ENCODE measurements at regions of chr6 and their contacts with region 1.

Region 1: DNA sequence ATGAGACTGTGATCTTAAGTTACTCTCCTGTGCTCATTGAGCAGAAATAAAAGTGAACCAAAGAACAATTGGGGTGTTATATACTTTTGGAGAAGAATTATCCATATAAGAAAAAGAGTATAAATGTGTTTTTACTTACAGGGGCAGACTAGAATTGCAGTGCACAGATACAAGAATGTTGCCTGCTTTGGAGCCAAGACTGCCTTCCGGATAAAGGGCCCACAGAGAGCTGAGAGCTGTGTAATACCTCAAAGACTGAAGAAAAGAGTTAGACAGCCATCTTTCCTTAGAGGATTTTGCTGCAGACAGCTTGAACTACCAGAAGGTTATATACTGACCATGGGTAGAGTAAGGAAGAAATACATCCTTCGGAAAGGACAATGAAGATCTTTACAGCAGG is 1235.5 kb upstream of the CITED2 start:
- DNase-seq: no peak
- H3K4me3 ChIP-seq: no peak overlapping the region
- H3K27ac ChIP-seq: no peak overlapping the region
- H3K4me1 ChIP-seq: no peaks in the 10 kb centered on the region
- H3K27me3 ChIP-seq: no peaks in the 10 kb centered on the region
- CTCF ChIP-seq: no peak
- POLR2A ChIP-seq: no peak

Region 2: DNA sequence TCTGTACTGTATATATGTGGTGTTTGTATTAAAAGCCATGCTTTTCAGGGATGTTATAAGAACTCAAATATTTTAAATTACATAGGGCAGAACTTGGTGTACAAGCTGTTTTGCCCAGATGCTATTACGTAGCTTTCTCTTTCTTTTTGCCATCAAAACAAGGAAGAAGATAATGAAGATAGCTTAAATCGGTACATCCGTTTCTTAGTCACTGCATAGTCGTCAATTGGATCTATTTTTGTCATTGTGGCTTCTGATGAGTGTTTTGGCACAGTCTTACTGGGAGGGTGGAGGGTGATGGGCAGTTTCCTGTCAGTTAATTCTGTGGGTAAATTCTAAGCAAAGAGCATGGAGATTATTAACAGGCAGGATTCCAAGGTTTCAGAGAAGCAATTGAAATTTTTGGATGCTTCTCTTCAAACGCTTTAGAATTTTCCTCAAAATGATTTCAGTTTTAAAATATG is 873.7 kb after region 1 on chr6:
- intact Hi-C with region 1: loop called (anchors 5 kb)
- DNase-seq: no peak
- H3K4me3 ChIP-seq: peak overlapping the region; percentile 14 to 55 (median 38)
- H3K27ac ChIP-seq: peak overlapping the region; percentile 27 to 45
- H3K4me1 ChIP-seq: no peaks in the 10 kb centered on the region
- H3K27me3 ChIP-seq: no peaks in the 10 kb centered on the region
- CTCF ChIP-seq: no peak
- POLR2A ChIP-seq: no peak